HEK293T (cell line): ENCODE measurements at regions of chr15 and their contacts with region 1.

Region 1: GRCh38 chr15:57527382-57528091 is 64.2 kb upstream of the MYZAP start:
- DNase-seq: peak; percentile 45

Region 2: GRCh38 chr15:57340682-57341259 is 186.8 kb before region 1 on chr15:
- CTCF ChIA-PET with region 1: interaction called, 87 read pairs
- POLR2A ChIA-PET with region 1: interaction called, 6 read pairs
- DNase-seq: peak; percentile 39

Region 3: GRCh38 chr15:57541805-57542504 is 14.4 kb after region 1 on chr15:
- CTCF ChIA-PET with region 1: interaction called, 10 read pairs
- POLR2A ChIA-PET with region 1: no interaction called
- DNase-seq: peak; percentile 53

Region 4: GRCh38 chr15:57570994-57571393 is 43.5 kb after region 1 on chr15:
- CTCF ChIA-PET with region 1: no interaction called
- POLR2A ChIA-PET with region 1: no interaction called
- DNase-seq: no peak